ENCODE measurements at regions of chr1 and their contacts with region 1.

Region 1: GRCh38 chr1:179002552-179003345 is 22.9 kb upstream of the FAM20B start:
- DNase-seq: peak; percentile 80 to 83
- H3K4me3 ChIP-seq: no peak overlapping the region
- H3K27ac ChIP-seq: peak overlapping the region in 1 of 2 donors; percentile 9
- H3K4me1 ChIP-seq: peaks cover 0 to 11% (median 6%) of the 10 kb centered on the region in 4 donors
- H3K27me3 ChIP-seq: no peaks in the 10 kb centered on the region
- CTCF ChIP-seq: peak; percentile 95 to 97

Region 2: GRCh38 chr1:178542560-178543356 is 460.0 kb before region 1 on chr1:
- intact Hi-C with region 1: loop called (anchors 5 kb)
- DNase-seq: peak; percentile 84 to 91
- H3K4me3 ChIP-seq: peak overlapping the region; percentile 61 to 67
- H3K27ac ChIP-seq: peak overlapping the region; percentile 55 to 58
- H3K4me1 ChIP-seq: peaks cover 0 to 14% (median 6%) of the 10 kb centered on the region in 4 donors
- H3K27me3 ChIP-seq: no peaks in the 10 kb centered on the region
- CTCF ChIP-seq: peak; percentile 95 to 99

Region 3: GRCh38 chr1:178768423-178768822 is 234.3 kb before region 1 on chr1:
- intact Hi-C with region 1: loop called (anchors 2 kb)
- DNase-seq: no peak
- H3K4me3 ChIP-seq: no peak overlapping the region
- H3K27ac ChIP-seq: no peak overlapping the region
- H3K4me1 ChIP-seq: no peaks in the 10 kb centered on the region
- H3K27me3 ChIP-seq: no peaks in the 10 kb centered on the region
- CTCF ChIP-seq: peak in 1 of 2 experiments; percentile 47

Region 4: DNA sequence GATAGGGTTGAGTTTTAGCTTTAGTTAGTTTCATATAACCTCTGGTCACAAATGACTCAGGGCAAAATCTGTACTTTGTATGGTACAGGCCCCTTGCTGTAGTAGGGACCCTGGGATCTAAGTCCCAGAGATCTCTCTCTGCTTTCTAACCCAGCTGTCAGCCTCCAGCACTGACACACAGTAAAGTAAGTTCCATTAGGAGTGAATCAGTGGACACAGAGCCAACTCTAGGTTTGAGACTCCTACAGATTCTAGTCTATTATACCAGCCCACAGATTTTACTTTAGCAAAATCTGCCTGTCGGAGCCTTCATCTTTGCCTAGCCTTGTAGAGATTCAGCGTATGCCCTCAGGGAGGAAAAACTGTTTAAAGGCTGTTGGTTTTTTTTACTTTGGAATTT is 184.3 kb before region 1 on chr1:
- intact Hi-C with region 1: loop called (anchors 2 kb)
- DNase-seq: no peak
- H3K4me3 ChIP-seq: no peak overlapping the region
- H3K27ac ChIP-seq: no peak overlapping the region
- H3K4me1 ChIP-seq: no peaks in the 10 kb centered on the region
- H3K27me3 ChIP-seq: no peaks in the 10 kb centered on the region
- CTCF ChIP-seq: no peak

Region 5: GRCh38 chr1:178938959-178939317 is 63.8 kb before region 1 on chr1:
- intact Hi-C with region 1: loop called (anchors 2 kb)
- DNase-seq: peak; percentile 86 to 96
- H3K4me3 ChIP-seq: peak overlapping the region; percentile 26 to 45
- H3K27ac ChIP-seq: peak overlapping the region; percentile 91 to 95
- H3K4me1 ChIP-seq: peaks cover 0 to 83% (median 63%) of the 10 kb centered on the region in 4 donors
- H3K27me3 ChIP-seq: no peaks in the 10 kb centered on the region
- CTCF ChIP-seq: no peak

Measured in tibial artery (tissue), 4 donors.